ENCODE measurements at regions of chr20 and their contacts with region 1.

Region 1: GRCh38 chr20:31578448-31579138 is 26.5 kb upstream of the ID1 start:
- DNase-seq: no peak
- H3K4me3 ChIP-seq: no peak overlapping the region
- CTCF ChIP-seq: no peak

Region 2: DNA sequence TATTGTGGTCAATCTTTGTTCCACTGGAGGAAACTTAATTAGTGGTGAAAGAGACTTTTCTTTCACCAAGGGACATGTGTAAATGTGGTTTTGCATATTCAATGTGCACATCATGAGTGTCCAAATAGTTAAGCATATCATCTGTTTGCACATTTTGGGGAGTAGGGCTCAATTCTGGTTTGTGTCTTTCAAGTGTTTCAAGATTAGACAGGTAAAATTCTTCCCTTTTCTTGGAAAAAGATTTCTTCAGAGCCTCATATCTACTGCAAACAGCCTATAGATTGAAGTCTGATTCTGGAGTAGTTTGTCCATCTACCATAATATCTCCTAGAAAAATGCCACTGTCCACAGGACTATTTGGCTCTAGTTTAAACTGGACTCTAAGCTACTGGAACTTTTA is 237.1 kb before region 1 on chr20:
- CTCF ChIA-PET with region 1: no interaction called
- POLR2A ChIA-PET with region 1: no interaction called
- DNase-seq: no peak
- H3K4me3 ChIP-seq: no peak overlapping the region
- CTCF ChIP-seq: no peak

Region 3: GRCh38 chr20:31454365-31454764 is 124.2 kb before region 1 on chr20:
- CTCF ChIA-PET with region 1: no interaction called
- POLR2A ChIA-PET with region 1: no interaction called
- DNase-seq: no peak
- H3K4me3 ChIP-seq: no peak overlapping the region
- CTCF ChIP-seq: no peak

Region 4: DNA sequence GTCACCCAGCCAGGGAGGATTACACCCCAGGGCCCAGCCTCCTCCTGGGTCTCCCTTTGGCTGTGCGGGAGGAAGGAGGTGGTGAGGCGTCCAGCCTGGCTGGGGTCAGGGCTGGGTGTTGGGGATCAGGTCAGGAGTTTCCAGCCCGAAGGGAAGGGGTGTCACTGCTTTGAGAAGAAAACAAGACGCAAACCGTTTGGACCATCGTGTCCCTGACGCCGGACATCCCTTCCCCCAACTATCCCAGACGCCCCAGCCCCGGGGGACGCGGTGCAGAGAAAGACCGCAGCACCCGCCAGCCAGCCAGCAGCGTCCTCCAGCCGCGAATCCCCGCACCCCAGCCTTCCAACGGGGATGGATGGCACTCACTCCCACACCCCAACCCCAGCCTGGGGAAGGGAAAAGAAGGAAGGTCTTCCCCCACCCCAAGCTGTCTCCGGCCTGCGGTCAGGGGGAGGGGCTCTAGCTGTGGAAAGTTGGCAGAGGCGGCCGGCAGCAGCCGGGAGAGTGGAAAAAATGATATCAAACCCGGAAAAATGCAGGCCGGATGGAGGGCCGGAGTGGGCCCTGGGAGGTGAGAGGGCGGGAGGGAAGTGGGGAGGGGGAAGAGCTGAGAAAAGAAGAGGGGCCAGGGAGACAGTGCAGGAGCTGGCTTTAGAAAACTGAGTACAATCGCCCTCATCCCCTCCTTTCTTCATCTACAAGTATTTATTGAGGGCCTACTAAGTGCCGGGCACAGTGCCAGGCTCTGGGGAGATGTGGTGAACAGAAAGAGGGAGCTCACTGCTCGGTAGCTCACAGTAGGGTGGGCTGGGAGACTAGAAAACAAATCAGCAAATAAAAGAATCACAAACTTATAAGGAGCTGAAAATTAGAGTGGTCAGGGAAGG is 92.9 kb before region 1 on chr20:
- CTCF ChIA-PET with region 1: no interaction called
- POLR2A ChIA-PET with region 1: no interaction called
- DNase-seq: no peak
- H3K4me3 ChIP-seq: peak overlapping the region; percentile 30; the same call in 1 of the 2 replicates
- CTCF ChIP-seq: no peak

Region 5: DNA sequence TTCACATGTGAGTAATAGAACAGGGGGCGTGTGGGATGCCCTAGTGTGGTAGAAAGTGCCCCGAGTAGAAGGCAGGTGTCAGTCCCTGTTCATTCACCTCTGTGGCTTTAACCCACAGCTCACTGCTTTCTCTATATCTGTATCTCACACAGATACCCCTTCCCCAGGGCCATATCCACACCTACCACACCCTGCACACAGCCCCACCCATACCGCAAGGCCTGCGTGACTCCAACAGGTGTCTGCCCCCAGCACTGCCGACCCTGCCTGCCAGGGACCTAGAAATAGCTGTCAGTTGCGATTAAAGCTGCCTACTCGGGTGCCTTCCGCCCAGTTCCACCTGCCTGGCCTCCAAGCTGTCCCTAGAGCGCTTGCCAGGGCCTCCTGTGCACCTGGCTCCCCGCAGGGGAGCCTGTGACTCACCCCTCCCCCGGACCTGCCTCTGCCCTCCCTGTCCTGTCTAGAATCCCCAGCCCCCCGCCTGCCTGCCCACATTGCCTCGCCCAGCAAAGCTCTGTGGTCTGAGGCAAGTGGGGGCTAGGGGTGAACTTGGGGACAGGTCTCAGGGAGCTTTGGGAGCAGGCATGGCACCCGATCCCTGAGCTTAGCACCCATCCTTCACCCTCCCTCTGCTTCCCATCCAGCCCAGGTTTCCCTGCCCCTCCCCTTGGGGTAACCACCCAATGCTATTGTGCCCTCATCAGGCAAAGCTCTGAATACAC is 11.8 kb before region 1 on chr20:
- CTCF ChIA-PET with region 1: interaction called, 202 read pairs
- POLR2A ChIA-PET with region 1: no interaction called
- DNase-seq: no peak
- H3K4me3 ChIP-seq: no peak overlapping the region
- CTCF ChIP-seq: no peak

Region 6: GRCh38 chr20:31764641-31765305 is 186.2 kb after region 1 on chr20:
- CTCF ChIA-PET with region 1: no interaction called
- POLR2A ChIA-PET with region 1: no interaction called
- DNase-seq: no peak
- H3K4me3 ChIP-seq: no peak overlapping the region
- CTCF ChIP-seq: no peak